ENCODE measurements at regions of chr6 and their contacts with region 1.

Region 1: GRCh38 chr6:42390228-42390934 is 61.3 kb downstream of the TRERF1 start:
- DNase-seq: no peak
- ATAC-seq: peak; percentile 76
- H3K4me3 Mint-ChIP-seq: peak overlapping the region; percentile 50
- H3K27ac Mint-ChIP-seq: peak overlapping the region; percentile 86
- H3K4me1 Mint-ChIP-seq: peaks cover 36% of the 10 kb centered on the region
- H3K27me3 Mint-ChIP-seq: no peaks in the 10 kb centered on the region
- CTCF ChIP-seq: no peak

Region 2: DNA sequence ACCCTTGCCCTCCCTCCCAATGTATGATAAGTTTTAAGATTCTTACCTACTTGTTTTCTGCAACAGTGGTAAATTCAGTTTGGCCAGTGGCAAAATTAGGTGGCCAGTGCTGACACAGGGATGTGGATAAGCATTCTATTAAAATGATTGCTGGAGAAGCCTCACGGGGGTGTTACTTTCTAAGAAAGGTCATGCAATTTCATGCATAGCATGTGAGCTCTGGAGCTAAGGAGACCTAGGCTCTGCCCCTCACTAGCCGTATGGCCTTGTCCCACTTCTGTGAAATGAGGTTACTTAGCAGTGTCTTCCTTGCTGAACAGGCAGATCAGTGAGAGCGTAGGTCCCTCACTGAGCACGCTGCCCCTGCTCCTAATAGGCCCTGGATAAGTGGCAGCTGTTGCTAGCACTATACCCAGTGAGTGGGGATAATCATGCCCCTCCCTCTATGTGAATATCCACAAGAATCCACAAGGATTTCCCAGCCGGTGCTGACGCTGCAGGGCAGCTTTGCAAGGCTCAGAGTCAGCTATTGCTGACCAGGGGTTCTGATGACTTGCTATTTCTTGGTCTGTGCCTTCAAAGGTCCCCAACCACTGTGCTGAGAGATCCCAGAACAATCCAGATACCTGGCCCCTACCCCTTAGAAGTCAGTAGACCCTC is 86.2 kb before region 1 on chr6:
- CTCF ChIA-PET with region 1: no interaction called
- POLR2A ChIA-PET with region 1: no interaction called
- intact Hi-C with region 1: no loop called
- DNase-seq: no peak
- ATAC-seq: no peak
- H3K4me3 Mint-ChIP-seq: no peak overlapping the region
- H3K27ac Mint-ChIP-seq: no peak overlapping the region
- H3K4me1 Mint-ChIP-seq: no peaks in the 10 kb centered on the region
- H3K27me3 Mint-ChIP-seq: no peaks in the 10 kb centered on the region
- CTCF ChIP-seq: no peak

Region 3: GRCh38 chr6:42367353-42368011 is 22.9 kb before region 1 on chr6:
- CTCF ChIA-PET with region 1: no interaction called
- POLR2A ChIA-PET with region 1: interaction called, 10 read pairs
- intact Hi-C with region 1: no loop called
- DNase-seq: peak; percentile 25
- ATAC-seq: peak; percentile 83
- H3K4me3 Mint-ChIP-seq: peak overlapping the region; percentile 76
- H3K27ac Mint-ChIP-seq: peak overlapping the region; percentile 79
- H3K4me1 Mint-ChIP-seq: peaks cover 45% of the 10 kb centered on the region
- H3K27me3 Mint-ChIP-seq: no peaks in the 10 kb centered on the region
- CTCF ChIP-seq: no peak

Measured in activated B cell treated with CpG ODN at 0.5 μM for 24 hours (primary cell).